Left ventricle myocardium inferior (tissue), 1 donor: ENCODE measurements at regions of chr13 and their contacts with region 1.

Region 1: GRCh38 chr13:112657850-112658444 is 31.9 kb upstream of the ATP11A start:
- DNase-seq: no peak
- H3K4me3 ChIP-seq: no peak overlapping the region
- H3K27ac ChIP-seq: no peak overlapping the region
- H3K4me1 ChIP-seq: no peaks in the 10 kb centered on the region
- H3K27me3 ChIP-seq: no peaks in the 10 kb centered on the region
- CTCF ChIP-seq: no peak

Region 2: GRCh38 chr13:112849500-112849899 is 191.6 kb after region 1 on chr13:
- intact Hi-C with region 1: loop called (anchors 10 kb)
- DNase-seq: no peak
- H3K4me3 ChIP-seq: no peak overlapping the region
- H3K27ac ChIP-seq: no peak overlapping the region
- H3K4me1 ChIP-seq: no peaks in the 10 kb centered on the region
- H3K27me3 ChIP-seq: no peaks in the 10 kb centered on the region
- CTCF ChIP-seq: no peak

Region 3: DNA sequence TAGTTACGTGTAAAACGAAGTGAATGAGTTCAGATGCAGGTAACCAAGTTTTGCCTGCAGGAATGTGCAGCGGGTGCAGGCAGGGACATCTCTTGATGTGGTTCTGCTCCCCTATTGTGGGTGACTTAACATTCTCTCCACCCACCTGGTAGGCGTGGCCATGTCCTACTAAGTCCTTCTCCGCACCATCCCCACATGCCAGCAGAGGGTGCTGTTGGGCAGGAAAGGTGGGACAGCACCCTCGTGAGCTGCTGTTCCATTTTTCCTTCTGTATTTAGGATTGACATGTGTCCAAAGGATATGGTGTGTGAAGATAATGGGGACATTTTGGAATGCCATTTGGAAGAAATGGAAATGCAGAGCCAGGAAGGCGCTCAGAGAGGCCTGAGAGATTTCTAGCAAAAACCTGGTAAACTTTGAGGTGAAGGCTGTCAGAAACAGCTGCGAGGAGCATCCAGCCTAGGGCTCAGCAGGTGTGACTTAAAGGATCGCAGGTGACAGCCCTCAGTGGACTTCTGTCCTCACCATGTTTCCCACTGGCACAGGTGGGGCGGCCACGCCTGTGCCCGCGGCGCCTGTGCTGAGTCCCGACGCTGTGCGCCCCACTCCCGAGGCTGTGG is 284.9 kb after region 1 on chr13:
- intact Hi-C with region 1: no loop called
- DNase-seq: peak; percentile 97
- H3K4me3 ChIP-seq: peak overlapping the region; percentile 74
- H3K27ac ChIP-seq: peak overlapping the region; percentile 81
- H3K4me1 ChIP-seq: peaks cover 15% of the 10 kb centered on the region
- H3K27me3 ChIP-seq: peaks cover 6% of the 10 kb centered on the region
- CTCF ChIP-seq: peak; percentile 97